ENCODE measurements at regions of chr9 and their contacts with region 1.

Region 1: GRCh38 chr9:78035383-78035993 is 3.9 kb upstream of the GNAQ start:
- DNase-seq: peak; percentile 72
- H3K4me3 ChIP-seq: no peak overlapping the region
- H3K27ac ChIP-seq: no peak overlapping the region
- H3K27me3 ChIP-seq: no peaks in the 10 kb centered on the region
- CTCF ChIP-seq: peak; percentile 89

Region 2: DNA sequence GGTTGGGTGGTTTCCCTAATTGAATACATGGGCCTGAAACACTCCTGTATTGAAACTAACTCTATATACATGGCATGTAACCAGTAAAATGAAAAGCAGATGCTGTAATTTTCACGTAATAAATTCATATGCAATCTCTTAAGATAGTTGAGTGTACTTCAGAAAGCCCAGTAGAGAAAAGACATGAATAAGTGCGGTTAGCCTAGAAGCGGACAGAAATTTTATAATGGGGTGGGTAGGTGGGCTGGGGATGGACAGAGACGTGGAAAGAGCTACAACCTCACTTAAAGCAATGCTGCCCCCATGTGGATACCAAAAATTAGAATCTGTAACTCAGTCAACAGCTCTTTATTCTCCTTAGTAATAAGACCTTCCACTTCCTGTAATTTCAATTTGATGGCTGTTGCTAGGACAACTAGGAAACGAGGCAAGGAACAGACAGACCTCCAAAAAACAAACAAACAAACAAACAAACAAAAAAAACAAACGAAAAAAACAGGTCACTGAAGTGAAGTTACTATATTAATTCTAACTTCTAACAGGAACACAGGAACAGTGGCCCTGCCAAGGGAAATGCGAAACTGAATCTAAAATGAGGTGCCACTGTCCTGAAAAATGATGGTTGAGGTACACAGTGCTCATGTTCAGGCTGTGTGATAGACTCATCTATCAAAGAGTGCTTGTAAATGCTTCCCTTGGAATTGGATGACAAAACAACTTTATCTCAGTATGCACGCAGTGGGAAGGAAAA is 284.0 kb before region 1 on chr9:
- CTCF ChIA-PET with region 1: interaction called, 22 read pairs
- POLR2A ChIA-PET with region 1: no interaction called
- DNase-seq: peak; percentile 26
- H3K4me3 ChIP-seq: no peak overlapping the region
- H3K27ac ChIP-seq: no peak overlapping the region
- H3K27me3 ChIP-seq: no peaks in the 10 kb centered on the region
- CTCF ChIP-seq: peak; percentile 63

Region 3: GRCh38 chr9:77819657-77820056 is 215.8 kb before region 1 on chr9:
- CTCF ChIA-PET with region 1: interaction called, 4 read pairs
- POLR2A ChIA-PET with region 1: interaction called, 11 read pairs
- DNase-seq: no peak
- H3K4me3 ChIP-seq: no peak overlapping the region
- H3K27ac ChIP-seq: no peak overlapping the region
- H3K27me3 ChIP-seq: no peaks in the 10 kb centered on the region
- CTCF ChIP-seq: no peak

Region 4: GRCh38 chr9:77841739-77842386 is 193.6 kb before region 1 on chr9:
- CTCF ChIA-PET with region 1: interaction called, 10 read pairs
- POLR2A ChIA-PET with region 1: no interaction called
- DNase-seq: no peak
- H3K4me3 ChIP-seq: no peak overlapping the region
- H3K27ac ChIP-seq: no peak overlapping the region
- H3K27me3 ChIP-seq: no peaks in the 10 kb centered on the region
- CTCF ChIP-seq: peak; percentile 40

Region 5: GRCh38 chr9:77977210-77977611 is 58.3 kb before region 1 on chr9:
- CTCF ChIA-PET with region 1: interaction called, 45 read pairs
- POLR2A ChIA-PET with region 1: interaction called, 3 read pairs
- DNase-seq: no peak
- H3K4me3 ChIP-seq: no peak overlapping the region
- H3K27ac ChIP-seq: no peak overlapping the region
- H3K27me3 ChIP-seq: no peaks in the 10 kb centered on the region
- CTCF ChIP-seq: peak; percentile 51

Measured in AG04450 (cell line).